Natural killer cell (primary cell): ENCODE measurements at regions of chr20 and their contacts with region 1.

Region 1: DNA sequence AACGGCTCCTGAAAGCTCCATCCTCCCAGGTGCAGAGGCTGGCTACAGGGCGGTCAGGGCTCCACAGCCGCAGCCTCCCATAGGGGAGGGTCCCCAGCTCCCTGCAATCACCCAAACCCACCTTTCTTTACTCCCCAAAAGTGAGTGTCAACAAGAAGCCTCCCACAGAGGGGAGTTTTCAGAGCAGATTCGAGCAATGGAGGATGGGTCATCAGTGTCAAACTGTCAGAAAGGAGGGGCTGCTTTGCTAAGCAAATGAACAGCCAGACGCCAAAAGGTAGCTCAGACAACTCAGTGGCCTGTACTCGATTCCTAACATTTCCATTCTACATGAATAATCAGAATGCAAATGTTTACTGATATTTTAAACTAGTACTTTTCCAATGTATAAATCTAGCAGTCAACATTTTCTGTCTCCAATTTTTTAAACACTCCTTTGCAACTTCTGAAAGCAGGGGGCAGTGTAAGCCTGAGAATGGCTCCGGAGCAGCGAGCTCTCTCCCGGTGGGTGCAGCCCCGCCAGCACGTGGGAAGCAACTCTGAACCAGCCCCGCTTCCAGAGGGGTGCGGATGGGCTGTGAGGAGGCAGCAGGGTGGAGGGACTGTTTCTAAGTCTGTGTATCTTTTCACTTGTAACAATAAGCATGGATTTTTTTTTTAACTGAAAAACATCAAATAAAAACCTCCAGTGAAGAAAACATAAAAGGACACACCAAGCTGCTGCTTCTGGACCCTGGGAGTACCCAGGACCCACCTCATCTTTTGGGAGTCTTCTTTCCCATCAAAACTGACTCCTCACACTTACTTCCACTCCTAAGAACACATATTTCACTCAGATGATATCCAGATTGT is 54.9 kb downstream of the TAF4 start:
- DNase-seq: peak; percentile 41 to 83
- ATAC-seq: peak; percentile 56 to 82 (median 73)
- H3K4me3 ChIP-seq: no peak overlapping the region
- H3K4me3 Mint-ChIP-seq: no peak overlapping the region
- H3K27ac ChIP-seq: no peak overlapping the region
- H3K27ac Mint-ChIP-seq: no peak overlapping the region
- H3K4me1 ChIP-seq: peaks cover 20% of the 10 kb centered on the region
- H3K4me1 Mint-ChIP-seq: peaks cover 29 to 44% of the 10 kb centered on the region in 2 donors
- H3K27me3 ChIP-seq: no peaks in the 10 kb centered on the region
- H3K27me3 Mint-ChIP-seq: no peaks in the 10 kb centered on the region
- CTCF ChIP-seq: peak; percentile 73

Region 2: DNA sequence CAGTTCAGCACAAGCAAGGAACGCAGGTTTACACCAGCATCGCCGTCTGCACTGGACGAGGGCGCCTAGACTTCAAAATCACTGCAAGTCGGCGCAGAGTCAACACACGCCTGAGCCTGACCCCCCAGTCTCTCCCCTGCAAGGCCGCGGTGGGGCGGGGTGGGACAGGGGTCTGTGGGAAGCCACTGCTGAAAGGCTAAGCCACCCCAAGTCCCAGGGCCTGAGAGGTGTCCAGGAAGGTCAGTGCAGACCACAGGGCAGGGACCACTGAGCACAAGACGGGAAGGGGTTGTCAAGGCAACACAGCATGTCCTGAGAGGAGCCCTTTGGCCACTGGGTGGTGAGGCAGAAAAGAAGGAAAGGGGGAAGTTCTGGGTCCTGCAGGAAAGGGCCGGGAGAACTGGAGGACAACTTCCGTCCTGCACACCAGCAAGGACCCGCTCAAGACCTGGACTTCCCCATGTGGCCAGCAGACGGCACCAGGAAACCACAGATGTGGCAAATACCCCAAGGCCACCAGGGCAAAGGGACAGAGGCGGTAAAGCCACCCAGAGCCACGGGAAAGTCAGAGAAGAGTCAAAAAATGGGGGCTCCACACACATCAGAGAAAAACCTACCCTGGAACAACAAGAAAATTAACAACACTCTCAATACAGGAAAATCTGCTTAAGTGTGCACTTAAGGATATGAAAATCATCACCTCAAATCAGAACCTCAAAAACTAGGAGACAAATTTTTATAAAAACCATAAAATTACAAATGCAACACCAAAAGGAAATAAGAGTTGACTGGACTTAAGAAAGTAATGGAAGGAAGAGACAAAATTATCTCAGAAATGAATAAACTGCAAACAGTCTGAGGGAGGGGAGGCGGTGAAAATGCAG is 29.8 kb before region 1 on chr20:
- intact Hi-C with region 1: no loop called
- DNase-seq: peak in 1 of 2 donors; percentile 20
- ATAC-seq: peak in 2 of 3 donors; percentile 46 to 56
- H3K4me3 ChIP-seq: no peak overlapping the region
- H3K4me3 Mint-ChIP-seq: peak overlapping the region; percentile 55
- H3K27ac ChIP-seq: peak overlapping the region; percentile 46
- H3K27ac Mint-ChIP-seq: peak overlapping the region; percentile 77 to 79
- H3K4me1 ChIP-seq: peaks cover 42% of the 10 kb centered on the region
- H3K4me1 Mint-ChIP-seq: peaks cover 37 to 51% of the 10 kb centered on the region in 2 donors
- H3K27me3 ChIP-seq: no peaks in the 10 kb centered on the region
- H3K27me3 Mint-ChIP-seq: no peaks in the 10 kb centered on the region
- CTCF ChIP-seq: no peak

Region 3: DNA sequence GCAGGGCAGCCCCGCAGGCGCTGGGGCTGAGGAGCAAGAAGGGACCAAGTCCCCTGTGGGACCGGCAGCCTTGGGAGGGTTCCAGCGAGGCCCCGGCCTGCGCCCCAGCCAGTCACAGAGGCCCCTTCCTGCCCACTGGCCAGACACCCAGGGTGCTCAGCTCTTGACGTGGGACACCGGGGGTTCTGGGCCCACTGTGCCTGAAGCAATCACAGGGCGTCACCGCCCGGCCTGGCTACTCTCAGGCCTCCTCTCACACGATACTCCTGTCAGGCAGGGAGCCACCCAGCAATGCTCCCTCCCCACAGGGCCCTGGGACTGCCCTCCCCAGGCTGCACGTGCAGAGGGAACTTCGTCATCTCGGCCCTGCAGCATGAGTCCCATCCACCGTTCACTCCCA is 40.4 kb after region 1 on chr20:
- intact Hi-C with region 1: no loop called
- DNase-seq: no peak
- ATAC-seq: no peak
- H3K4me3 ChIP-seq: no peak overlapping the region
- H3K4me3 Mint-ChIP-seq: no peak overlapping the region
- H3K27ac ChIP-seq: no peak overlapping the region
- H3K27ac Mint-ChIP-seq: peak overlapping the region in 1 of 2 donors; percentile 84
- H3K4me1 ChIP-seq: peaks cover 15% of the 10 kb centered on the region
- H3K4me1 Mint-ChIP-seq: peaks cover 31 to 87% of the 10 kb centered on the region in 2 donors
- H3K27me3 ChIP-seq: no peaks in the 10 kb centered on the region
- H3K27me3 Mint-ChIP-seq: no peaks in the 10 kb centered on the region
- CTCF ChIP-seq: no peak

Region 4: DNA sequence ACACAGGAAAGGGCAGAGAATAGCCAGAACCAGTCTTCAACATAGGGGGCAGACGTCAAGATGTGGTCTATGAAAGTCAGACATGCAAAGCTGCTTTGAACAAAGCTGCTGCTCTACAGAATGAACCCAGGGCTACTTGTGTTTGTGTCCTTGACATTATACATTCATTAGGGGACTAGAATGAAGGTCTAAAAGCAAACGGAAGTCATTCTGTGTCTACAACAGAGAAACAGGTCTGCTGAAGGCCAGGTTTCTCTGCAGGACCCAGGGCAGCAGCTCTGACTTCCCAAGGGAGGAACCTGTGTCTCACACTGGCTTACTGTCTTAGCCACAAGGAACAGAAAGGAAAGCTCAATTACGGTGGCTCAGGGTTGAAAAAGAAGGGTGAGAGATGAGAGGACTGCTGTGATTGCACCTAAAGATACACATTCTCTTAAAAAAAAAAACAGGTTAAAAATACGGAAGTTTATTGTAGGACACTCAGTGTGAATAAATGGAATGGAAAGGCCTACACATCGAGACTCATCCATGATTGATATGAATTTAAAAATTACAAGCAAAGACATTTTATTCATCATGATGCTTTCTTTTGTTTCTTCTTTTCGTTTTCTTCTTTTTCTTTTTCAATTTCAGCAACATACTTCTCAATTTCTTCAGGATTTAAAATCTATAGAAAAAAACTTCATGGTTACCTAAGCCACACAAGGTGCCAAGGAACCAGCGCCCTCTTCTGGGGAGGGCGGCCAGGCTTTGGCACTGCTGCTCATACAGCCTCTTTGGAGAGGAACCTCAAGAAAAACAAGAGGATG is 125.7 kb after region 1 on chr20:
- intact Hi-C with region 1: loop called (anchors 2 kb)
- DNase-seq: peak; percentile 58 to 88
- ATAC-seq: peak; percentile 58 to 73 (median 60)
- H3K4me3 ChIP-seq: no peak overlapping the region
- H3K4me3 Mint-ChIP-seq: no peak overlapping the region
- H3K27ac ChIP-seq: no peak overlapping the region
- H3K27ac Mint-ChIP-seq: peak overlapping the region; percentile 51 to 76
- H3K4me1 ChIP-seq: peaks cover 21% of the 10 kb centered on the region
- H3K4me1 Mint-ChIP-seq: peaks cover 44 to 50% of the 10 kb centered on the region in 2 donors
- H3K27me3 ChIP-seq: no peaks in the 10 kb centered on the region
- H3K27me3 Mint-ChIP-seq: no peaks in the 10 kb centered on the region
- CTCF ChIP-seq: peak; percentile 73

Region 5: DNA sequence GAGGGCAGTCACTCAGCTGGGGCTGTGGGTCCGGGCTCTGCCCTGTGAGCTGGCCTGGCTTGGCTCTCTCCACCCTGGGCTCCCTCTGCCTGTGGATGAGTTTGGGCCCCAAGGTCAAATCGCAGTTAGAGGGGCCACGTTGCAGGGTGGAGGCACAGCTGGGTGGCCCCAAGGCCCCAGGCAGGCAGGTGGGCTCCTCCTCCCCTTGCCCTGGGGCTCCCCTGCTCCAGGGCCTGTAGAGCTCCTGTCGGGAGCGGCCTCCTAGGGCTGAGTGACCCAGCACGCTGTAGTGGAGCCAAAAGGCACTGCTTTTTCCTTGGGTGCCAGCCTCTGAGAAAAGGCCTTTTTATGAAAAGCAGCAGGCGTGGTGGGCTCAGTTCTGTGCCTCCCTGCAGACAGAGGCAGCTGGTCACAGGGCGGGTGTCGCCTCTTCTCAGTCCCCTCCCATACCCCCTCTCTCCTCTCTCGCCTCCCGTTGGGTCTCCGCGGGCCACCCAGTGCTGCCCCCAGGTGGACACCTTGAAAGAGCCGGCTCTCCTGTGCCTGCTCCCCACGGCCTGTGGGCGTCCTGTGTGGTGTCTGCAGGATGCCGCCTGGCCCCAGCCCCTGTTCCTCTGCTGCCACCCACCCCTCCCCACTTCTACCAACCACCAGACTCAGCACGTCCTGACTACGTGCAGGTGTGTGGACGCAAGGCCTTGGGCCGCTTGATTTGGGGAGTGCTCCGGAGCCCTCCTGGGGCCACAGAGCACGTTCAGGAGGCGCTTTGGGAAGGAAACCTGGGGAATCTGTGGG is 146.0 kb after region 1 on chr20:
- intact Hi-C with region 1: loop called (anchors 2 kb)
- DNase-seq: peak; percentile 69 to 80
- ATAC-seq: peak; percentile 88 to 94 (median 94)
- H3K4me3 ChIP-seq: no peak overlapping the region
- H3K4me3 Mint-ChIP-seq: no peak overlapping the region
- H3K27ac ChIP-seq: no peak overlapping the region
- H3K27ac Mint-ChIP-seq: no peak overlapping the region
- H3K4me1 ChIP-seq: peaks cover 18% of the 10 kb centered on the region
- H3K4me1 Mint-ChIP-seq: peaks cover 5 to 23% of the 10 kb centered on the region in 2 donors
- H3K27me3 ChIP-seq: no peaks in the 10 kb centered on the region
- H3K27me3 Mint-ChIP-seq: no peaks in the 10 kb centered on the region
- CTCF ChIP-seq: peak; percentile 74

Region 6: GRCh38 chr20:62386383-62387218 is 375.8 kb after region 1 on chr20 and contains the start of gene RPS21:
- intact Hi-C with region 1: loop called (anchors 10 kb)
- DNase-seq: peak; percentile 93 to 97
- ATAC-seq: peak; percentile 95
- H3K4me3 ChIP-seq: peak within 1 kb of the TSS; percentile 89
- H3K4me3 Mint-ChIP-seq: peak within 1 kb of the TSS; percentile 87
- H3K27ac ChIP-seq: peak within 1 kb of the TSS; percentile 97
- H3K27ac Mint-ChIP-seq: peak within 1 kb of the TSS; percentile 84 to 94
- H3K4me1 ChIP-seq: peaks cover 29% of the 10 kb centered on the region
- H3K4me1 Mint-ChIP-seq: peaks cover 31 to 54% of the 10 kb centered on the region in 2 donors
- H3K27me3 ChIP-seq: no peaks in the 10 kb centered on the region
- H3K27me3 Mint-ChIP-seq: no peaks in the 10 kb centered on the region
- CTCF ChIP-seq: no peak
- total RNA-seq, gene RPS21: 887 to 1,244 (median 1,112) TPM